Spleen (tissue), 13 donors: ENCODE measurements at regions of chr7 and their contacts with region 1.

Region 1: GRCh38 chr7:111942450-111943081 is 263.6 kb downstream of the DOCK4 start:
- DNase-seq: no peak
- H3K4me3 ChIP-seq: no peak overlapping the region
- H3K27ac ChIP-seq: no peak overlapping the region
- H3K4me1 ChIP-seq: no peaks in the 10 kb centered on the region
- H3K27me3 ChIP-seq: no peaks in the 10 kb centered on the region
- CTCF ChIP-seq: no peak
- POLR2A ChIP-seq: no peak

Region 2: DNA sequence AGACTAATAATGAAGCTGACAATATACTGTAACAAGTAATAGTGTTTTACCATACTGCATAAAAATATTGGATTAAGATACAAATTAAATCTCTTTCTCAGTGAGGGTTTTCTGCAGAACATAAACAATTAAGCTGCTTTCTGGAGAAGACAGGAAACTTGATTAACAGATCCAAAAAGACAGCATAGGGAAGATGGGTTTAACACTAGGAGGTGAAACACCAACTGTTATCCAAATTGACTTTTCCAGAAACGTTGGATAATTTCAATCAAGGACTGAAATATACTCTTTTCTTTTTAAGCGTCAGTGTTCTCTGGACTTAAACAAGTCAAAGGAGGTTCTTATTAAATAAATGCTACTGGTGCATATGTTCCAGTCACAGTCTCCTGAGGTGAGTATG is 334.9 kb before region 1 on chr7:
- intact Hi-C with region 1: no loop called
- DNase-seq: no peak
- H3K4me3 ChIP-seq: no peak overlapping the region
- H3K27ac ChIP-seq: no peak overlapping the region
- H3K4me1 ChIP-seq: no peaks in the 10 kb centered on the region
- H3K27me3 ChIP-seq: no peaks in the 10 kb centered on the region
- CTCF ChIP-seq: no peak
- POLR2A ChIP-seq: no peak

Region 3: DNA sequence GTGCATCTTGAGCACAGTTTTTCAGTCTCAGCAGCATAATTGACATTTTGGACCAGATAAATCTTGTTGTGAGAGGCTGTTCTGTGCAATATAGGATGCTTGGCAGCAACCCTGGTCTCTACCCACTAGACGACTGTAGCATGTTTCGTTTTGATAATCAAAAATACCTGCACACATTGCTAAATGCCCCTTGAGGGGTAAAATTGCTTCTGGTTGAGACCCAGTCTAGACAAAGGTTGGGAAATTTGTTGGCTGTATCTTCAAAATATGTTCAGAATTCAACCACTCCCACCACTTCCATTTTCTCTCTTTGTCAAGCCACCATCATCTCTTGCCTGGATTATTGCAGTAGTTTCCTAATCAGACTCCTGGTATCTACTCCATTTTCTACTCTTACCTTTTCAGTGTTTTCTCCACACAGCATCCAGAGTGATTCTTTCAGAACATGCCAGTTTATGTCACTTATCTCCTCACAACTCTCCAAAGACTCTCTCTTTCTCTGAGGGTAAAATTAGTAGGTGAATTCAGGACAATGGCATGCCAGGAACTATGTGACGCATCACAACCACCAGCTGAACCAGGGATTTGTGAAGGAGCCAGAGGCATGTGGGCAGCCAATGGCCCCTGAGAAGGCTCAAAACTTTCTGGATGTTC is 1052.7 kb after region 1 on chr7:
- intact Hi-C with region 1: loop called (anchors 10 kb)
- DNase-seq: no peak
- H3K4me3 ChIP-seq: no peak overlapping the region
- H3K27ac ChIP-seq: no peak overlapping the region
- H3K4me1 ChIP-seq: no peaks in the 10 kb centered on the region
- H3K27me3 ChIP-seq: no peaks in the 10 kb centered on the region
- CTCF ChIP-seq: no peak
- POLR2A ChIP-seq: no peak